Activated CD8-positive, alpha-beta memory T cell treated with anti-CD3 and anti-CD28 coated beads, Interleukin-2, amount 10 ng/mL, durations not matched to agents 7 days and 5 days (primary cell): ENCODE measurements at regions of chr1 and their contacts with region 1.

Region 1: GRCh38 chr1:154479764-154480421 is 22.1 kb upstream of the TDRD10 start:
- DNase-seq: peak; percentile 71
- ATAC-seq: peak; percentile 91
- H3K4me3 Mint-ChIP-seq: no peak overlapping the region
- H3K27ac Mint-ChIP-seq: no peak overlapping the region
- H3K4me1 Mint-ChIP-seq: peaks cover 7% of the 10 kb centered on the region
- H3K27me3 Mint-ChIP-seq: peaks cover 19% of the 10 kb centered on the region

Region 2: GRCh38 chr1:154404984-154405761 is 74.7 kb before region 1 on chr1 and contains the start of gene IL6R:
- CTCF ChIA-PET with region 1: interaction called, 13 read pairs
- DNase-seq: peak; percentile 68
- ATAC-seq: peak; percentile 61
- H3K4me3 Mint-ChIP-seq: peak within 1 kb of the TSS; percentile 59
- H3K27ac Mint-ChIP-seq: no peak within 1 kb of the TSS
- H3K4me1 Mint-ChIP-seq: peaks cover 60% of the 10 kb centered on the region
- H3K27me3 Mint-ChIP-seq: peaks cover 48% of the 10 kb centered on the region
- total RNA-seq, gene IL6R: 0.53 to 0.66 TPM

Region 3: DNA sequence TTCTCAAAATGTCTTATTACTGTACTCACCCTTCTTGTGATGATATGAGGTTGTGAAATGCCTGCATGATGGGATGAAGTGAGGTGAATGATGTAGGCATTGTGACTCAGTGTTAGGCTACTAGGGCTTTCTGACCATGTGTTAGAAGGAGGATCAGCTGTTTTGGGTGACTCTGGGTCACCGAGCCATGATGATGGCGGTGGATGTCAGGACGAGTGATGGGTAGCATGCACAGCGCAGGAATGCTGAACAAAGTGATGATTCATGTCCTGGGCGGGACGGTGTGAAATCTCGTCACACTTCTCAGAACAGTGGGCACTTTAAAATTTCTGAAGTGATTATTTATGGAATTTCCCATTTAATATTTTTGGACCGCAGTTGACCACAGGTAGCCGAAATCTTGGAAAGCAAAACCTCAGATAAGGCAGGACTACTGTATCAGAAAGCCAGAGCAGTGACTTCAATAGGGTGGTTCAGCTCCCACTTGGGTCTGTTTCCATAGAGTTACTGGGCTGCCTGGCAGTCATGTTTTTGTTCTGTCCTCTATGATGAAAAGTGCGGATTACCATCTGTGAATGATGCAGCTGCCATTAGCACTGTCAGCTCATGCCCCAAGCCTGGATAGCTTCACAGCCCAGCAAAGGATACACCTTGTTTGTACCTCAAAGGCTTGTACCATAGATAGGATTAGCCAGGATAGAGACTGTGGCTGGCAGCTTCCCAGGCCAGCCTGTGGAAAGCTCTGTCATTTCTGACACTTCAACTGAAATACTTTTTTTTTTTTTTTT is 48.1 kb before region 1 on chr1:
- CTCF ChIA-PET with region 1: no interaction called
- DNase-seq: peak; percentile 58
- ATAC-seq: peak; percentile 79
- H3K4me3 Mint-ChIP-seq: no peak overlapping the region
- H3K27ac Mint-ChIP-seq: no peak overlapping the region
- H3K4me1 Mint-ChIP-seq: peaks cover 23% of the 10 kb centered on the region
- H3K27me3 Mint-ChIP-seq: no peaks in the 10 kb centered on the region

Region 4: GRCh38 chr1:154463512-154463990 is 16.3 kb before region 1 on chr1:
- CTCF ChIA-PET with region 1: interaction called, 43 read pairs
- DNase-seq: peak; percentile 84
- ATAC-seq: peak; percentile 96
- H3K4me3 Mint-ChIP-seq: no peak overlapping the region
- H3K27ac Mint-ChIP-seq: peak overlapping the region; percentile 69
- H3K4me1 Mint-ChIP-seq: peaks cover 47% of the 10 kb centered on the region
- H3K27me3 Mint-ChIP-seq: peaks cover 28% of the 10 kb centered on the region

Region 5: DNA sequence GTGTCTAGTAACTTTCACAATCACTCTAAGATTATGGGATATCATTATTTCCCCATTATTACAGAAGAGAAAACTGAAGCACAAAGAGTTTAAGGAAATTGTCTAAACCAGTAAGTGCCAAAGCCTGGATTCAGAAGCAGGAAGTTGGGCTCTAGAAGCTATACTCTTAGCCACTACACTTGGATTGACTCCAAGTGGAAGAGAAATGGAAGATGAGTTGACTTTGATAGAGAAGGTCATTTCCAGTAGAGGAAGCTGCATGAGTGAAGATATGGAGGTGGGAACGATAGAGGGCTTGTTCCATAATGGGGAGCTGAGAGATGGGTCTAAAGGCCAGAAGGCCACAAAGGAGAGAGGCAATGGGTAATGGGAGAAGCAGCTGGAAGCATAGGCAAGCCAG is 10.4 kb after region 1 on chr1:
- CTCF ChIA-PET with region 1: interaction called, 21 read pairs
- DNase-seq: no peak
- ATAC-seq: no peak
- H3K4me3 Mint-ChIP-seq: no peak overlapping the region
- H3K27ac Mint-ChIP-seq: no peak overlapping the region
- H3K4me1 Mint-ChIP-seq: peaks cover 16% of the 10 kb centered on the region
- H3K27me3 Mint-ChIP-seq: peaks cover 30% of the 10 kb centered on the region

Region 6: DNA sequence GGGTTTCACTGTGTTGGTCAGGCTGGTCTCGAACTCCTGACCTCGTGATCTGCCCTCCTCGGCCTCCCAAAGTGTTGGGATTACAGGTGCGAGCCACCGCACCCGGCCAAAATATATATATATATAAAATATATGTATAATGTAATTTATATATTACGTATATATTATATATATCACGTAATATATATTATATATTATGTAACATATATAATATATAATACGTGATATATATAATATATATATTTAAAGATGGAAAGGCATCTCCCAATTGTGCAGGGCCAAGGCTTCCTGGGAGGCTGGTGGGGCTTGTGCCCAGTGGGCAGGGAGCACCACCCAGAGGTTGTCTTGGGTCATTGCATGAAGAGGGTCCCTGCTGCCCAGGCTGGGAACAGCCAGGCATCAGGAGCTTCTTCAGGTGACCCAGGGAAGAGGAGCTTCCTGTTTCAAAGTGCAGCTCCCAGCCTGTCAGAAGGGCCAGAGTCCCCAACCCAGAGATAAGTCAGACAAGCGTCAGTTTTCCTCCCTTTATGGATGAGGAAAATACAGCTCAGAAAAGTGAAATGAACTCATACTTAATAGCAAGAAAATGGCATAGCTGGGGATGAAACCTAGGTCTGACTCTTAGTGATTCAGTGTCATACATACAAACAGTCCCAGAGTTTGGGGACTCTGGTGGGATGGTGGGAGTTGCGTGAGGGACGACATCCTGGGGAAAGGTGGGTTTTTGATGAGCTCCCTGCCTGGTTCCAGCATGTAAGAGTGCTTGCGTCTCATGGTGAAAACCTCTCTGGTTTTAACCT is 66.6 kb after region 1 on chr1:
- CTCF ChIA-PET with region 1: interaction called, 78 read pairs
- DNase-seq: peak; percentile 69
- ATAC-seq: peak; percentile 86
- H3K4me3 Mint-ChIP-seq: no peak overlapping the region
- H3K27ac Mint-ChIP-seq: no peak overlapping the region
- H3K4me1 Mint-ChIP-seq: peaks cover 9% of the 10 kb centered on the region
- H3K27me3 Mint-ChIP-seq: peaks cover 4% of the 10 kb centered on the region

Region 7: DNA sequence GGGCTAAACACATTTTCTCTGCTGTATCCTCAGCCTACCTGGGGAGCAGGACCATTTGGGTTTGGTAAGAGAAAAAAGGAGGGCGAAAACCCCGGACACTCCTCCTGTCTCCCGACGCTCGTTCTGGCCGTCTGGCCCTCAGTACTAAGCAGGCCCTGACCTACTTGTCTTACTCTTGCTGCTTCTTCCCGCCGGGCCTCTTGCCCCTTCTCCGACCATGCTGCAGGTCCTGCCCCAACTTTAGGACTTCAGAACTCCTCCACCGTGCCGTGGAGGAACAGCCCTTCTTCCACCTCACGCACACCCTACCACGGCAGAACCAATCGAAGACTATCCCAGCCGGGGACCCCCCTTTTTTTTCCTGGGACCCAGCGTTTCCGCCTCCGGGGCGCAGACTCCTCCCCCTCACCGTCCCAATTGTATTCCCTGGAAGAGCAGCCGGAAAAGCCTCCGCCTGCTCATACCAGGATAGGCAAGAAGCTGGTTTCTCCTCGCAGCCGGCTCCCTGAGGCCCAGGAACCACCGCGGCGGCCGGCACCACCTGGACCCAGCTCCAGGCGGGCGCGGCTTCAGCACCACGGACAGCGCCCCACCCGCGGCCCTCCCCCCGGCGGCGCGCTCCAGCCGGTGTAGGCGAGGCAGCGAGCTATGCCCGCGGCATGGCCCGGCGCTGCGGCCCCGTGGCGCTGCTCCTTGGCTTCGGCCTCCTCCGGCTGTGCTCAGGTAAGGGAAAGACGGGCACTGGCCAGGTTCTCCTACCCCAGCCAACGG is 87.7 kb after region 1 on chr1 and contains the start of gene CHRNB2:
- CTCF ChIA-PET with region 1: interaction called, 13 read pairs
- DNase-seq: peak; percentile 73
- ATAC-seq: peak; percentile 99
- H3K4me3 Mint-ChIP-seq: peak within 1 kb of the TSS; percentile 17
- H3K27ac Mint-ChIP-seq: no peak within 1 kb of the TSS
- H3K4me1 Mint-ChIP-seq: peaks cover 5% of the 10 kb centered on the region
- H3K27me3 Mint-ChIP-seq: peaks cover 39% of the 10 kb centered on the region
- total RNA-seq, gene CHRNB2: not detected